ENCODE measurements at regions of chr9 and their contacts with region 1.

Region 1: DNA sequence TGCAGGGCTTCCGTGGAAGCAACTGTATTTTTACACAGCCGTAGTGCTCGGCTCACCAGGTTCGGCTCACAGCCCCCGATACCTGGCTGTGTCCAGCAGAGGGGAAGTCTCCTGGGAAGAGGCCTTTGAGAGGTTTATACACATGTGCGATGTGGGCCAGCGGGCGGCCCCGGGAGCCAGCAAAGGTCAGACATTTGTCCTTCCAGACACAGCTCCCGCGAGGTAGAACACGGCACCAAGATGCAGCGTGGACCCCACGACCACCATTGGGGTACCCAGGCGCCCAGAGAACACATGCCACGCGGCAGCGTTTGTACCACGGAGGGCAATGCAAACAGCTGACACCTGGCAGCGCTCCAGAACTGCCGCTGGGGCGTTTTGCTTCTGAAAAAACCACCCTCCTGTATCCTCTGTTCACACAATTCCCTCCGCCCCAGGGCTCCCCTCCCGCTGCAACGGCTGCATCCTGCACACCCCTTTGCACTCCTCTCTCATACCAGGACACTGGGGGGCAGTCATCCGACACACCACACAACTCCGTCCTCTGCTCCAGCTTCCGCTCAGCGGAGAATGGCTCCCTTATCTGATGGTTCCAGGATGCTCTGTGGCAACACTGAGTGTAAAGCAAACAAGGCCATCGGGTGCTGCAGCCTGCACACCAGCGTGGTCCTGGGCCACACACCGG is 235.3 kb downstream of the SYK start:
- DNase-seq: peak; percentile 94
- H3K4me3 ChIP-seq: no peak overlapping the region
- H3K27ac ChIP-seq: peak overlapping the region; percentile 89
- H3K4me1 ChIP-seq: peaks cover 17% of the 10 kb centered on the region
- H3K27me3 ChIP-seq: no peaks in the 10 kb centered on the region
- CTCF ChIP-seq: peak; percentile 78 to 83
- POLR2A ChIP-seq: no peak

Region 2: DNA sequence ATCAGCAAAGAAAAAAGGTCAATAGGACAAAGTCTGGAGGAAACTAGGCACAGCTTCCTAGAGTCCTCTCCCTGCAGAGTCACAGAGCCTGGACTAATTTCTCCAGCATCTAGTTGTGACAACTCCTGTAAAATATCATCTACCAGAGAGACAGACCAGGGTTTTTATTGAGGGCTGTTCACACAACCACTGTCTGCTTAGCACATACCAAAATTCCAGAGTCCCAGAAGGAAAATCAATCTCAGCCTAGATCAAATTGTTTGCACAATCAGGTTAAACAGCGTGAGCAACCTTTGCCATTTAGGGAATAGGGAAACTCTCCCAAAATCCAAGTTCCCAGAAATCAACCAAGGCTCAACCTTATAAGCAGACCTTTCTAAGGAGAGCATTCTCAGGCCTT is 45.0 kb before region 1 on chr9:
- CTCF ChIA-PET with region 1: no interaction called
- POLR2A ChIA-PET with region 1: no interaction called
- dilution Hi-C with region 1: no loop called
- intact Hi-C with region 1: loop called (anchors 2 kb)
- DNase-seq: no peak
- H3K4me3 ChIP-seq: no peak overlapping the region
- H3K27ac ChIP-seq: peak overlapping the region; percentile 46
- H3K4me1 ChIP-seq: peaks cover 10% of the 10 kb centered on the region
- H3K27me3 ChIP-seq: no peaks in the 10 kb centered on the region
- CTCF ChIP-seq: no peak
- POLR2A ChIP-seq: no peak

Region 3: DNA sequence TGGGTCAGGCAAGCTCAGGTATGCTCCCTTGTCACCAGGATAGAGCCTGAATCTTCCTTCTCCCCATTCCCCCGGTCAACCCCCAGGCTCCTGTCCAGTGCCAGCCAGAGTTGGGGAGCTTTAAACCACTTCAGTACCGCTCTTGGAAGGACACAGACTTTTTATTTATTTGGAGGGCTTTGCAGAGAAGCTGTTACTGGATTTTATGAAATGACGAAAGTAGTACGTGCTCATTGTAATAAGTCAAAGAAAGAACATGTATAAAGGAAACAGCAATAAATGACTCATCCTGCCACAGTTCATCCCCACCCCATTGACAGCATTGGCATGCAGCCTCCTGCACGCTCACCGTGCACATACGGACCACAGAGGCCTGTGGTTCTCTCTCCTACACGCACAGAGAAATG is 94.5 kb after region 1 on chr9:
- CTCF ChIA-PET with region 1: no interaction called
- POLR2A ChIA-PET with region 1: no interaction called
- dilution Hi-C with region 1: no loop called
- intact Hi-C with region 1: loop called (anchors 1 kb)
- DNase-seq: peak; percentile 72
- H3K4me3 ChIP-seq: no peak overlapping the region
- H3K27ac ChIP-seq: peak overlapping the region; percentile 16
- H3K4me1 ChIP-seq: peaks cover 9% of the 10 kb centered on the region
- H3K27me3 ChIP-seq: no peaks in the 10 kb centered on the region
- CTCF ChIP-seq: no peak
- POLR2A ChIP-seq: no peak

Region 4: GRCh38 chr9:91298311-91298710 is 261.3 kb after region 1 on chr9:
- CTCF ChIA-PET with region 1: no interaction called
- POLR2A ChIA-PET with region 1: no interaction called
- dilution Hi-C with region 1: no loop called
- intact Hi-C with region 1: loop called (anchors 5 kb)
- DNase-seq: no peak
- H3K4me3 ChIP-seq: no peak overlapping the region
- H3K27ac ChIP-seq: no peak overlapping the region
- H3K4me1 ChIP-seq: peaks cover 9% of the 10 kb centered on the region
- H3K27me3 ChIP-seq: no peaks in the 10 kb centered on the region
- CTCF ChIP-seq: no peak
- POLR2A ChIP-seq: no peak

Region 5: DNA sequence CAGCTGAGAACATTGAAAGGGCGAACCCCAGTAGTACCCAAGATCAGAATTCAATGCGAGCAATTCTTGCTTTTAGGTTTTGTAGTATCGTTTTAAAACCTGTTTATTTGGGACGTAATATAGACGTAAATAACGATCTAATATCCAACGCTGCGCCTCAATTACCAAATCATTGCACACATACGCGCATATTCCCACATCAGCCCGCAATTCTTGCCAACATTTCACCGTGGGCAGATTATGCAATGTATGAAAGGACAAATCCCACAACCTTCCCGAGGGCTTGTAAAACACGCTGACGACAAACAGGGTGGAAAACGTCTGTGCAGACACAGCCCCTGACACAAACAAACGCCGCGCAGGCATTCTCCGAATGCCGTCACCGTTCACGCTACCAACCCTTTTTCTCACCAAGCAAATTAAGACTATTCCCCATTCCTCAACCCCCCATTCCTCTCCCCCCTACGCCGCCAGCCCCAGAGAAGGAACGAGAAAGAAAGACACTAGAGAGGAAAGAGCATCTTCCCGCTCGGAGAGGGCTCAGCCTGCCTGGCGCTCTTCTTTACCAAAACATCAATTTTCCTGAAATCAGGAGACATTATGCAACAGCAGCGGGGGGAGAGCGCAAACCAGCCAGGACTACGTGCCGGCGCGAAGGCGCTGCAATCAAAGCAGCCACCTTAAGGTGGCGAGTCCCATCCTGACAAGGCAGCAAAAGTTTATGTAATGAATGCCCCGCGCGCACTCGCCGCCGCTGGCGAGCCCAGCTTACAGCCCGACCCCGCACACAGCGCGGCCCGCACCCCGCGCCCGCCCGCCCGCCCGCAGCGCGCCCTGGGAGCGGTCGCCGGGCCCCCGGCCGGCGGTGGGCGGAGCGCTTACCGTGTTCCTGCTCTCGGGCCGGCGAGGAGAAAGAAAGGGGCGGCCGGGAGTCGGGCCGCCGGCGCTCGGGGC is 386.1 kb after region 1 on chr9:
- CTCF ChIA-PET with region 1: interaction called, 45 read pairs
- POLR2A ChIA-PET with region 1: no interaction called
- dilution Hi-C with region 1: no loop called
- intact Hi-C with region 1: loop called (anchors 1 kb)
- DNase-seq: peak; percentile 73
- H3K4me3 ChIP-seq: peak overlapping the region; percentile 57 to 81 (median 60)
- H3K27ac ChIP-seq: peak overlapping the region; percentile 46
- H3K4me1 ChIP-seq: peaks cover 35% of the 10 kb centered on the region
- H3K27me3 ChIP-seq: no peaks in the 10 kb centered on the region
- CTCF ChIP-seq: peak; percentile 4 to 38
- POLR2A ChIP-seq: no peak

Region 6: DNA sequence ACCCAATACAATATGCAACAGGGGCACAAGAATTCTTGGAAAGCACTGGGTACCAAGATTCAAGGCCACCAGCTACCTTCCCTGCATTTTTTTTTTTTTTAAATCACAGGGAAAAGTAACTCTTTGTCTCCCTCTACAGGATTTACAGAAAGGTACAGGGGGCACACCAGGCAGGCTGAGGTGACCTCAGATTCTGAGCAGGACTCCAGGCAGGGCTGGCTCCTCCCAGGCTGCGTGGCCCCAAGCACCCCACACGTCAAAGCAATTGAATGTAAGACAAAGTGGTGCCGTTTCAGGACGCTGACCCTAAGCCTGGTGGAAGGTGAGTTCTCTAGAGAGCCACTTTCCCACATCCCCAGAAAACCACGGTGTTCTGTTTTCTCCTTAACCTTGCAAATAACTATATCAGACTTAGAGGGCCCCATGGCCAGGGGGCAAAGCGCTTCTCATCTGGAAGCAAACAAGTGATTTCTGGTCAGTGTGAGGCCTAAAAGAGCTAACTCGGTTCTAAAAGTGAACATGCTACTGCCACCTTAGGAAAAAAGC is 690.4 kb after region 1 on chr9:
- CTCF ChIA-PET with region 1: interaction called, 10 read pairs
- POLR2A ChIA-PET with region 1: no interaction called
- dilution Hi-C with region 1: no loop called
- intact Hi-C with region 1: loop called (anchors 1 kb)
- DNase-seq: peak; percentile 50
- H3K4me3 ChIP-seq: no peak overlapping the region
- H3K27ac ChIP-seq: no peak overlapping the region
- H3K4me1 ChIP-seq: no peaks in the 10 kb centered on the region
- H3K27me3 ChIP-seq: no peaks in the 10 kb centered on the region
- CTCF ChIP-seq: peak; percentile 62 to 64
- POLR2A ChIP-seq: no peak

Measured in endothelial cell of umbilical vein (primary cell).